Left ventricle myocardium inferior (tissue), 1 donor: ENCODE measurements at regions of chr2 and their contacts with region 1.

Region 1: DNA sequence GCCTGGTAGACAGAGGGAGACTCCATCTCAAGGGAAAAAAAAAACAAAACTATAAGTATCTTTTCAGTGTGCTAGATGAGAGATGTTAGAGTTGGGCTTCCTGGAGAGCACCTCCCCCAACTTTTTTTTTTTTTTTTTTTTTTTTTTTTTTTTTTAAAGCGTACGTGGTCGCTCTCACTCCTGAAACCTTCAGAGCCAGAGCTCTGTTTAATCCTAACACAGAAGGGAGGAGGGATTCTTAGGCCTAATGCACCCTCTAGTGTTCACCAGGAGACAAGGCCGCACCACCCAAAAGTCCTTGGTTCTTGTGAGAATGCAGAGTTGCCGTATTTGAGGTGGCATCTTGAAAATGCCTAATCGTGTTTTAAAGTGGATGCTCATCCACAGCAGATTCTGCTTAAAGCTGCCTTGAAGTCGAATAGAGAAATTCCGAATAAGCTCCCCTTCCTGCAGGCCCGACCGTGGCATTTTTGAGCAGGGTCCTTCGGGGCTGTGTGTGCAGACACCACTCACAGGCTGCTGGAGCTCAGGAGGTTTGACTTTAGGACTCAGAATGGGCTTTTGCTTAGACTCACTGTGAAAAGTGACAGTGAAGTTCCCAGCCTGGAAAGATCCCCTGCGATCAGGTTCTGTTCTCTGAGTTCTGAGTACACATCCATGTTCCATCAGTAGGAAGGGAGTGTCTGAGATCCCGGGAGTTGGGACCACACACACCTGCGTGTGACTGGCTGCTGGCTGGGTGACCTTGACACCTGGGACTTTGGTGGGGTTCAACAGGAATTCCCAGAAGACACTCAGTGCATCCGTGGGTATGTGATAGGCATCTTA is 252.6 kb downstream of the AGAP1 start:
- DNase-seq: no peak
- H3K4me3 ChIP-seq: no peak overlapping the region
- H3K27ac ChIP-seq: no peak overlapping the region
- H3K4me1 ChIP-seq: peaks cover 19% of the 10 kb centered on the region
- H3K27me3 ChIP-seq: no peaks in the 10 kb centered on the region
- CTCF ChIP-seq: peak; percentile 85

Region 2: DNA sequence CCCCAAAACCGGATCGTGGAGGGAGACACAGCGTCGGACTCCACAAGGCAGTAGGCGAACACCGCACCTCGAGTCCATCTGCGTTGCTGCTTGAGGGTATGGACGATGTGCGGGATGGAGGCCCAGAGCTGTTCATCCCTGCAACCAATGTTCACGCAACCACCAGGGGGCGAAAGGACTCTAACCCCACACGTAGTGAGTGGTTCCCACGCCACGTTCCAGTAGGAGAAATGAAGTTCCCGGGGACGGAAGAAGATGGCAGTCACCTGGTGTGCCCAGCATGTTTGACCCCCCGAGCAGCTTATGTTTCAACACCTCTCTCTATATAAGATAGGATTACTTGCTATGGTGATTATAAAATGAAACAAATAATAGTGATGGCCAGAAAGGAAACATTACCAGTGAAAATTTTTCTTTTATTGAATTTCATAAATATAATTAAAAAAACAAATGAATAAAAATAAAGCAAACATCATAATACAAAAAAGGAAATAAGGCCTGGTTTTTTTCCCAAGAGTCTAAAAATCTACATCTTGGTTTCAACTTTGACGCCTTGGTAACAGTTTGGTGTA is 610.4 kb before region 1 on chr2:
- intact Hi-C with region 1: loop called (anchors 5 kb)
- DNase-seq: peak; percentile 78
- H3K4me3 ChIP-seq: no peak overlapping the region
- H3K27ac ChIP-seq: no peak overlapping the region
- H3K4me1 ChIP-seq: no peaks in the 10 kb centered on the region
- H3K27me3 ChIP-seq: peaks cover 17% of the 10 kb centered on the region
- CTCF ChIP-seq: peak; percentile 86

Region 3: GRCh38 chr2:235659767-235660322 is 86.6 kb before region 1 on chr2:
- intact Hi-C with region 1: no loop called
- DNase-seq: no peak
- H3K4me3 ChIP-seq: no peak overlapping the region
- H3K27ac ChIP-seq: no peak overlapping the region
- H3K4me1 ChIP-seq: peaks cover 29% of the 10 kb centered on the region
- H3K27me3 ChIP-seq: no peaks in the 10 kb centered on the region
- CTCF ChIP-seq: no peak